Transverse colon (tissue), 4 donors: ENCODE measurements at regions of chr6 and their contacts with region 1.

Region 1: GRCh38 chr6:132768051-132768517 is 10.4 kb upstream of the VNN2 start:
- DNase-seq: peak; percentile 21
- H3K4me3 ChIP-seq: no peak overlapping the region
- H3K27ac ChIP-seq: no peak overlapping the region
- H3K4me1 ChIP-seq: no peaks in the 10 kb centered on the region
- H3K27me3 ChIP-seq: no peaks in the 10 kb centered on the region
- CTCF ChIP-seq: peak; percentile 14 to 69 (median 46)
- EP300 ChIP-seq: no peak
- POLR2A ChIP-seq: no peak

Region 2: DNA sequence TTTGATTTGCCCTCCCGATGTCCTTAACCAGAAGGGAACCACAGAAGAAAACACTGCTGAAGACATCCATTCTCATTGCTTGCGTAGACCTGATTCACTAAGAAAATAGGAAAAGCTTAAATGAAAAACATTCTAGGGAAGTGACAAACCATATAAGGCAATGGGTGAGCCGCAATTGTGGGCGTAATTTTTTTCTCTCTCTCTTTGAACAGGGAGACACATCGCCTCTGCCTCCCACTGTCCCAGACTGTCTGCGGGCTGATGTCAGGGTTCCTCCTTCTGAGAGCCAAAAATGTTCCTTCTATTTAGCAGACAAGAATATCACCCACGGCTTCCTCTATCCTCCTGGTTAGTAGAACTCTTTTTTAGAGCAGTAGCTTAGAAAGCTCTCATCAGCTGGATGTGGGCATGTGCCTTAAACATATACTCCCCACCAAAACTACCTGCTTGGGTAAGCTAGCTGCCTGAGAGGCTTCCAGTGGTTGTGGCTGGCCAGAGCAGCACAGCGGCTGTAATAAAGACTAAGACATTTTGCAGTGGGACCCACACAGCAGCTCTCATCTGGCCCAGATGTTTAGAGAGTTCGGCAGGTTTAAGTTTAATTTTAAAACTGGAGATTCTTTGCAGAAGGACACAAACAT is 1034.6 kb before region 1 on chr6:
- in situ Hi-C with region 1: no loop called
- intact Hi-C with region 1: no loop called
- DNase-seq: no peak
- H3K4me3 ChIP-seq: no peak overlapping the region
- H3K27ac ChIP-seq: no peak overlapping the region
- H3K4me1 ChIP-seq: no peaks in the 10 kb centered on the region
- H3K27me3 ChIP-seq: no peaks in the 10 kb centered on the region
- CTCF ChIP-seq: no peak
- EP300 ChIP-seq: no peak
- POLR2A ChIP-seq: no peak

Region 3: GRCh38 chr6:132530293-132530974 is 237.7 kb before region 1 on chr6:
- in situ Hi-C with region 1: loop called in 3 of 4 experiments (anchors 25 kb)
- intact Hi-C with region 1: no loop called
- DNase-seq: peak; percentile 63
- H3K4me3 ChIP-seq: peak overlapping the region in 1 of 4 donors; percentile 9
- H3K27ac ChIP-seq: no peak overlapping the region
- H3K4me1 ChIP-seq: peaks cover 0 to 4% (median 2%) of the 10 kb centered on the region in 4 donors
- H3K27me3 ChIP-seq: no peaks in the 10 kb centered on the region
- CTCF ChIP-seq: peak; percentile 80 to 90 (median 85)
- EP300 ChIP-seq: no peak
- POLR2A ChIP-seq: no peak